Lower leg skin (tissue), 4 donors: ENCODE measurements at regions of chr14 and their contacts with region 1.

Region 1: DNA sequence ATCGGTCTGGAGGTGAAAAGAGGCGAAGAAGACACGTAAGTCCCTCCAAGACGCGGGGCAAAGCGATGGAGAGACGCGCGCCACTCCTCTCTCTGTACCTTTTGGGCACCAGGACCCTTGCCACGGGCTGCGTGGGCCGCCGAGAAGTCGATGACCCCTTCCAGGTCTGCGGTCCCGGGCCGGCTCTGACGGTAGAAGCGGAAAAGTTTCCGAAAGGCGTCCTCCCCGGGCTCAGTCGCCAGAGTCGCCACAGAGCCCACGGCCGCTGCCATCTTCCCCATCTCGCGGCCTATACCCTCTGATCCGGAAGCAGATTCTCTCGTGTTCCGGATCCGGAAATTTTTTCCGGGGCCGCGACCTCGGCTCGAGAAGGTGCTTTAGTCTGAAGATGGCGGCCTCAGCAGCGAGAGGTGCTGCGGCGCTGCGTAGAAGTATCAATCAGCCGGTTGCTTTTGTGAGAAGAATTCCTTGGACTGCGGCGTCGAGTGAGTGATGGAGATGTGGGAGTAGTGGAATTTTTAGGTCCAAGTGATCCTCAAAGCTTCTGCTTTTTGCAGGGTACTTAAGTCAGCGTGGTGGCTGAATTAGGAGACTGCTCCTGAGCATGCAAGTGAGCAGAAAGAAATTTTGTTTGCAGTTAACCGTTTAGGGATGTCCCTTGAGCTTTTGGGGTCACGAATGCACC is at the starts of genes ALKBH1 and SLIRP:
- DNase-seq: peak; percentile 83 to 97
- H3K4me3 ChIP-seq: peak within 1 kb of the TSS; percentile 95
- CTCF ChIP-seq: no peak
- POLR2A ChIP-seq: peak in 1 of 2 donors; percentile 16
- total RNA-seq, gene ALKBH1: 10.7 to 15.8 (median 14.9) TPM
- total RNA-seq, gene SLIRP: 87.1 to 309 (median 107) TPM

Region 2: GRCh38 chr14:77347751-77348150 is 360.1 kb before region 1 on chr14:
- intact Hi-C with region 1: loop called (anchors 10 kb)
- DNase-seq: no peak
- H3K4me3 ChIP-seq: no peak overlapping the region
- CTCF ChIP-seq: no peak
- POLR2A ChIP-seq: no peak

Region 3: DNA sequence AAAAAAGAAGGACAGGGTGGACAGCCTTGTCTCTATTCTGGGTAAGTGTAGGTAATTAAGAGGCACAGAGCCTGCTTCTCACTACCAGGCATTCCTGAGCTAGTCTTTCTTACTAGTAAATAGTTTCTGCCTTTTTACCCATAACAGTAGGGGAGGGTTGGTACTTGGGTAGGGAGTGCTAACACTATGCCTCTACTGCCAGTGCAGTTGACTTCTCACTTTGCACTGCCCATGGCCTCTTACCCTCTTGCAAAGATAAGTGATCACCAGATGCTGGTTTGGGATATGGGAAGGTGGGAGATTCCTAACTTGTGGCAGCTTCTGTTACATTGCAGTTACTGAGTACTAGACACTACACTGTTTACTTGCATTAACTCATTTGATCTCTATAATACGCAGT is 238.3 kb before region 1 on chr14:
- intact Hi-C with region 1: loop called (anchors 10 kb)
- DNase-seq: peak in 1 of 2 donors; percentile 18
- H3K4me3 ChIP-seq: no peak overlapping the region
- CTCF ChIP-seq: no peak
- POLR2A ChIP-seq: no peak